ENCODE measurements at regions of chr1 and their contacts with region 1.

Region 1: DNA sequence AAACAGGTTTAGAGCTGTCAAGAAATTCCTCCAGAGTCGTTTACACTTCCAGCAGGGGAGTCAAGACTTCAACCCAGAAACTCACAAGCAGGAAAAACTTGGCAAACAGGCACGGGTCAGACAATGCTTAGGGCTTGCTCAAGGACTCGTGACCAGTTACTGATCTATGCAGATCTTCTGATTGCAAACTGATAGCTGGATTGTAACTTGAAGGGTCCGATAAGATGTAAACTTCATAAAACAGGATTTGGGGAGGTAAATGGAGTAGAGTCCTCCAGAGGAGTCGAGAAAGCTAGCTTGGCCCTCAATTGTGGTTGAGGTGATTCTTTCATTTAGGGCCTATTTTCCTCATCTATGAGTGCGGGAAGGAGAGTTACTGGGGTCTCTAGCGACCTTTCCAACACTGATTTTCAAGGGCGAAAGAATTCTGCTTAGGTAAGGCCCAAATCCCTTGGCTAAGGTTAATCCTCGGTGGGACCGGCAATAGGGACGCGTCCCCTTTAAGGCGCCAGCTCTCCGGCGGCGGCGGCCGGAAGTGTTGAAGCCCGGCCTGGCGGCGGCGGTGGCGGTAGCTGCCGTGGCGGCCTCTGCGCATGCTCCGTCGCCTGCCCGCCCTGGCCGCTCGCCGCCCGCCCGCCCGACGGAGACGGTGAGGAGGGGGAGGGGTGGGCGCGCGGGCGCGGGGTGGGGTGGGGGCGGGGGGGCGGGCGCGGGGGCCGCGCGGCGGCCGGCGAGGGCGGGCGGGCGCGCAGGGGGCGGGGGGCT is at the start of gene GMEB1:
- DNase-seq: peak; percentile 79
- H3K4me3 ChIP-seq: peak within 1 kb of the TSS; percentile 74 to 94 (median 89)
- H3K27ac ChIP-seq: peak within 1 kb of the TSS; percentile 90
- H3K4me1 ChIP-seq: peaks cover 12% of the 10 kb centered on the region
- H3K27me3 ChIP-seq: no peaks in the 10 kb centered on the region
- CTCF ChIP-seq: no peak
- POLR2A ChIP-seq: no peak
- total RNA-seq, gene GMEB1: 14.5 and 16.0 TPM in 2 replicates

Region 2: DNA sequence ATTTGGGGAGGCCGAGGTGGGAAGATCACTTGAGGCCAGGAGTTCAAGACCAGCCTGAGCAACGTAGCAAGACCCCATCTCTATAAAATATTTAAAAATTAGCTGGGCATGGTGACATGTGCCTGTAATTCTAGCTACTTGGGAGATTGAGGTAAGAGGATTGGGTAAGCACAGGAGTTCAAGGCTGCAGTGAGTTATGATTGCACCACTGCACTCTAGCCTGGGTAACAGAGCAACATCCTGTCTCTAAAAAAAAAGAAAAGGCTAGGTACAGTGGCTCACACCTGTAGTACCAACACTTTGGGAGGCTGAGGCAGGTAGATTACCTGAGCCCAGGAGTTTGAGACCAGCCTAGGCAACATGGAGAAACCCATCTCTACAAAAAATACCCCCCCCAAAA is 198.2 kb before region 1 on chr1:
- CTCF ChIA-PET with region 1: no interaction called
- POLR2A ChIA-PET with region 1: no interaction called
- dilution Hi-C with region 1: no loop called
- intact Hi-C with region 1: no loop called
- DNase-seq: no peak
- H3K4me3 ChIP-seq: no peak overlapping the region
- H3K27ac ChIP-seq: no peak overlapping the region
- H3K4me1 ChIP-seq: no peaks in the 10 kb centered on the region
- H3K27me3 ChIP-seq: no peaks in the 10 kb centered on the region
- CTCF ChIP-seq: no peak
- POLR2A ChIP-seq: no peak

Region 3: DNA sequence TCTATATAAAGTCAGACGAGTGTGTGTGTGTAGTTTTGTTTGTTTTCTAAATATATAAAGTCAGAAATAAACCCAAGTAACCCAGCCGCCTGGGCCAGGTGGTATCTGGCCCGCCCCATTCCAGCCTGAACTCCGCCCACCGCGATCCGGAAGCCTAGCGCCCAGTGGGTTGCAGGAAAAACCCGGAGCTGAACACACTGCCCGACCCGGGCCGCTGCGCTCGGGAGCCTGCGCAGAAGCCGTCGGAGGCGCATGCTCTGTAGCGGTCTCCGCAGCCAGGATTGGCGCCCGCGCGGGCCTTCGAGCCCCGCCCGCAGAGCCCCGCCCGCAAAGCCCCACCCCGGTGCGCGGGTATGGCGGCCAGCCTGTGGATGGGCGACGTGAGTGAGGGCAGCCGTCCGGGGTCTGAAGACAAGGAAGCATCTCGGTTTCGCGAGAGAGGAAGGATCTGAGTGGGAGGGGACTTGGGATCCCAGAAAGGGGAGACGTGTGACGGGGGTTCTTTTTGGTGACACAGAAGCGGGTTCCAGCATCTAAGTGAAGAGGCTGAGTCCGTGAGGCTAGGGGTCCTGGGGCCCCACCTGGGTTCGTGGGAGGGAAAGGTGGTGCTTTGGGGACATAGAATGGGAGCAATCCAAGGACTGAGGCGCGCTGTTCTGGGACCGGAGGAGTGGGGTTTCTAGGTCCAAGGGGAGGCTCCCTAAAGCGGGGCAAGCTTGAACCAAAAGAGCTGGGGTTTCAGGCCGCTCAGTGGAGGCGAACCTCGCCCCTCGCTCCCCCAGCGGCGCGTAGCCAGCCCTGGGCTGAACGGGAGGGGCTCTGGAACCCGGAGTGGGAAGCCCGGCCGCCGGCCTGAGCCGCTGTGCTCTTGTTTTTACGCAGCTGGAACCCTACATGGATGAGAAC is 115.4 kb before region 1 on chr1 and contains the start of gene TRNAU1AP:
- CTCF ChIA-PET with region 1: no interaction called
- POLR2A ChIA-PET with region 1: no interaction called
- dilution Hi-C with region 1: no loop called
- intact Hi-C with region 1: no loop called
- DNase-seq: peak; percentile 98
- H3K4me3 ChIP-seq: peak within 1 kb of the TSS; percentile 79 to 86 (median 85)
- H3K27ac ChIP-seq: peak within 1 kb of the TSS; percentile 39
- H3K4me1 ChIP-seq: peaks cover 12% of the 10 kb centered on the region
- H3K27me3 ChIP-seq: no peaks in the 10 kb centered on the region
- CTCF ChIP-seq: no peak
- POLR2A ChIP-seq: peak; percentile 86
- total RNA-seq, gene TRNAU1AP: 46.2 and 49.0 TPM in 2 replicates

Region 4: DNA sequence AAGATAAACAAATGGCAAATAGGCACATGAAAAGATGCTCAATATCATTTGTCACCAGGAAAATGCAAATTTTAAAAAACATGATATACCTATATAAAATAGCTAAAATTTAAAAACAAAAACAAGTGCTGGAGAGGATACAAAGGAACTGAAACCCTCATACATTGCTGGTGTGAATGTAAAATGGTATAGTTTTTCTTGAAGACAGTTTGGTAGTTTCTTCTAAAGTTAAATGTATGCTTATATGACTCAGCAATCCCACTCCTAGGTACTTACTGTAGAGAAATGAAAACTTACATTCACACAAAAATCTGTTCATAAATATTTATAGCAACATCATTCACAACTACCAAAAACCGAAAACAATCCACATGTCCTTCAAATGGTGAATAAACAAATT is 36.7 kb before region 1 on chr1:
- CTCF ChIA-PET with region 1: no interaction called
- POLR2A ChIA-PET with region 1: no interaction called
- dilution Hi-C with region 1: no loop called
- intact Hi-C with region 1: no loop called
- DNase-seq: no peak
- H3K4me3 ChIP-seq: no peak overlapping the region
- H3K27ac ChIP-seq: no peak overlapping the region
- H3K4me1 ChIP-seq: no peaks in the 10 kb centered on the region
- H3K27me3 ChIP-seq: no peaks in the 10 kb centered on the region
- CTCF ChIP-seq: no peak
- POLR2A ChIP-seq: no peak

Region 5: GRCh38 chr1:28648474-28649198 is 19.7 kb before region 1 on chr1 and contains the start of gene RNU11:
- CTCF ChIA-PET with region 1: interaction called, 4 read pairs
- POLR2A ChIA-PET with region 1: interaction called, 35 read pairs
- dilution Hi-C with region 1: no loop called
- intact Hi-C with region 1: loop called (anchors 1 kb)
- DNase-seq: peak; percentile 97
- H3K4me3 ChIP-seq: peak within 1 kb of the TSS in 2 of 3 experiments; percentile 18 to 20
- H3K27ac ChIP-seq: peak within 1 kb of the TSS; percentile 97
- H3K4me1 ChIP-seq: peaks cover 10% of the 10 kb centered on the region
- H3K27me3 ChIP-seq: no peaks in the 10 kb centered on the region
- CTCF ChIP-seq: no peak
- POLR2A ChIP-seq: peak; percentile 100
- total RNA-seq, gene RNU11: not detected in 2 replicates

Measured in endothelial cell of umbilical vein (primary cell).